ENCODE measurements at regions of chr9 and their contacts with region 1.

Region 1: DNA sequence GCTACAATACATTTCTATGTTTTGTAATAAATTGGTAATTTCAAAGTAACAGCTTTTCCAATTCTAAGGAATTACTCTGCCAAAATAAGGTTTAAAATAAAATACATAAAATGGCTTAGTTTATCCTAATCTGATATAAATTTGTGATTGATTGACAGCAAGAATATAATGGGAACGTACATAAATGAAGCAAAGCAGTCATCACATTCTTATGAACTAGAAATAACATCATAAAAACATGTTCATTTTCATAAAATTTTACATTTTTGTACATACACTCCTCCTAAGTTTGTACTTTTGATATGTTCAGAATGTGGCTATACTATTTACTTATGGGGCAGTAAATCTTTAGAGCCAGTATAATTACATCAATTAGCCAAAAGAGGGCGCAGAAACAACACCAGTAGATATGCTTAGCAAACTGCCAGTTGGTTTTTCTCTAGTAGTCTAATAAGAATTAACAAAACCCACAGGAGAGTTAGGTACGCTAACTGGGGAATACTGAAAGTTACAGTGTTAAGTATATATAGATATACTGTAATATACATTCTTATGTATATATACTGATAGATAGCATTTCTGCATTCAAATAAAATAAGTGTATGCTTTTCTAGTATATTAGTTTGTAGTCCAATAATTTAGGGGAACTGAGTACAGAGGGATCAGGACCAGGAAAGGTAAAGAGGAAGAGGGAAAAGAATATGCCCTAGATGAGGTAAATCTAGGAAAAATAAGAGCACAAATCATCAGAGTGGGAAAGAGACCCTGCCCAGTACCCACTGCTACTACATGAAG is 76.8 kb downstream of the ZDHHC21 start:
- DNase-seq: no peak
- ATAC-seq: no peak
- H3K4me3 Mint-ChIP-seq: no peak overlapping the region
- H3K27ac Mint-ChIP-seq: no peak overlapping the region
- H3K4me1 Mint-ChIP-seq: no peaks in the 10 kb centered on the region
- H3K27me3 Mint-ChIP-seq: no peaks in the 10 kb centered on the region

Region 2: GRCh38 chr9:14119694-14120514 is 496.5 kb before region 1 on chr9:
- CTCF ChIA-PET with region 1: no interaction called
- DNase-seq: no peak
- ATAC-seq: no peak
- H3K4me3 Mint-ChIP-seq: no peak overlapping the region
- H3K27ac Mint-ChIP-seq: no peak overlapping the region
- H3K4me1 Mint-ChIP-seq: no peaks in the 10 kb centered on the region
- H3K27me3 Mint-ChIP-seq: no peaks in the 10 kb centered on the region

Region 3: GRCh38 chr9:14768405-14769229 is 152.2 kb after region 1 on chr9:
- CTCF ChIA-PET with region 1: interaction called, 10 read pairs
- DNase-seq: no peak
- ATAC-seq: no peak
- H3K4me3 Mint-ChIP-seq: no peak overlapping the region
- H3K27ac Mint-ChIP-seq: no peak overlapping the region
- H3K4me1 Mint-ChIP-seq: no peaks in the 10 kb centered on the region
- H3K27me3 Mint-ChIP-seq: peaks cover 29% of the 10 kb centered on the region